ENCODE measurements at regions of chr4 and their contacts with region 1.

Region 1: DNA sequence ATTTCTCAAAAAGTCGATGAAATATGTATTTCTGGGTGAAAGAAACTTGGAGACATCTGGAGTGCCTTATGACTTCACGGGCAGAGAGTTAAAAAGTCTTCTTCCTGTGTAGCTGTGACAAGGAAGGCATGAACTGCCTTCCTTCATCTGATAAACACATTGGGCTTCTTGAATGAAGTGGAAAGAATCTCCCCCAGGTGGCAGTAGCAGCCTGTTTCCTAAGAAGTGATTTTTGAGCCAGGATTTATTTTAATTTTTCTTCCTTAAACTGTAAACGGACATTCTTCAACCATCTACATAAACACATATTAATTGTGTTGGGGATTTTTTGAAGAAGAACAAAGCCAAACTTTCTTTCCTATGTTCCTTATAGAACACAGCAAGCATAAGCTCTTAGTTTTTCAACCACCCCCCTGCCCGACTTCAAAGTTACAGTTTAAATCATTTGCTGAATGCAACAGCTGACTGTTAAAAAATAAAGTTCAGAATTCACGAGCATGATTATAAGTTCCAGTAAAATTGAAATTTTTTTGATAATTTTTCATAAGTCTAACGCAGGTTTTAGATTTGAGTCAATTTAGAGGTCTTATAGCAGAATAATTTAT is 980 bp upstream of the GIMD1 start:
- DNase-seq: peak; percentile 50
- H3K4me3 ChIP-seq: no peak overlapping the region
- H3K27ac ChIP-seq: no peak overlapping the region
- H3K4me1 ChIP-seq: peaks cover 12% of the 10 kb centered on the region
- H3K27me3 ChIP-seq: no peaks in the 10 kb centered on the region
- CTCF ChIP-seq: peak; percentile 71 to 76

Region 2: GRCh38 chr4:106266201-106266600 is 103.4 kb before region 1 on chr4:
- CTCF ChIA-PET with region 1: interaction called, 26 read pairs
- dilution Hi-C with region 1: no loop called
- in situ Hi-C with region 1: no loop called
- intact Hi-C with region 1: loop called (anchors 1 kb)
- DNase-seq: peak; percentile 37
- H3K4me3 ChIP-seq: no peak overlapping the region
- H3K27ac ChIP-seq: no peak overlapping the region
- H3K4me1 ChIP-seq: no peaks in the 10 kb centered on the region
- H3K27me3 ChIP-seq: no peaks in the 10 kb centered on the region
- CTCF ChIP-seq: peak; percentile 55 to 67

Region 3: DNA sequence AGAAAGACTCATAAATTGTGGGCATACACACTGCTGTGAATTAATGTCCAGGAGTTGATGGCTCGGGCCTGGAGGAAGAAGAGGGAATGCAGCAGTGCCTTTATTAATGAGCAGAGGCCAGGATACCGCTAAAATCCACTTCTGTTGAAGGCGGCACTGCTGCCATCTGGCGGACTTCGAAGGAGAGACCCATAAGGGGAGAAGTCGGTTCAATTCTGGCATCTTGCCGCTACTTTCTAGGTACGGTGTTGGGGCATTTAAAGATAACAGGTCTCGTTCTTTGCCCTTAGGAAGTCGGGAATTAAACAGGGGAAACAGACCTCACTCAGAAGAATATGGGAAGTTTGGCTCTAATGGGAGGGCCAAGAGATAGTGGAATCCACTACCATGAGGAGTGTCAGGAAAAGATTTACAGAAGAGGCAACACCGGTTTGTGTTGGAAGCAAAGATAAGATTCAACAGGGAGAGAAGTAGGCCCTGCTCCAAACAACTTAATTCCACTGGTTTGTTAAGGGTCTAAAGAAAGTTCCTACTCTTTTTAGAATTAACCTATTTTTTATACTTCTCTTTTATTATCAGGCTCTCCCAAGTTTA is 132.6 kb after region 1 on chr4:
- CTCF ChIA-PET with region 1: no interaction called
- dilution Hi-C with region 1: no loop called
- in situ Hi-C with region 1: loop called in 1 of 2 experiments (anchors 10 kb)
- intact Hi-C with region 1: loop called (anchors 1 kb)
- DNase-seq: peak; percentile 52
- H3K4me3 ChIP-seq: no peak overlapping the region
- H3K27ac ChIP-seq: no peak overlapping the region
- H3K4me1 ChIP-seq: no peaks in the 10 kb centered on the region
- H3K27me3 ChIP-seq: no peaks in the 10 kb centered on the region
- CTCF ChIP-seq: peak; percentile 65 to 87

Region 4: DNA sequence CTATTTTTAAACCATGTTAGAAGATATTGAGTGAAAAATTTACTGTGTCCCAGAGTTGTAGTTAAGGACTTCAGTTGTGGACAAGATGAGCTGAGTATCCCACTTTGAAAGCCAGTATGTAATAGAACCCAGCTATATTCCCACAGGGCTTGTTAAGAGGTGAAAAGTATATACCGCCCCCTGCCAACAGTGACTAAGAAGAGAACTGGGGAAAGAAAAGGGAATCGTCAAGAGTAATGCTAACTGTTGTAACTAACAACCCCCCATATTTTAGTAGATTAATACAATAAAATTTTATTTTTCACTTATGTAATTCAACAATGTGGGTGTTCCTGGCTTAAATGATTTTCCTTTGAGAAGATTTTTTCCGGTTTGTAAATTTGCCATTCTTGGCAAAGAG is 249.4 kb after region 1 on chr4:
- CTCF ChIA-PET with region 1: no interaction called
- dilution Hi-C with region 1: no loop called
- in situ Hi-C with region 1: no loop called
- intact Hi-C with region 1: loop called (anchors 10 kb)
- DNase-seq: no peak
- H3K4me3 ChIP-seq: no peak overlapping the region
- H3K27ac ChIP-seq: no peak overlapping the region
- H3K4me1 ChIP-seq: no peaks in the 10 kb centered on the region
- H3K27me3 ChIP-seq: no peaks in the 10 kb centered on the region
- CTCF ChIP-seq: peak in 1 of 2 donors; percentile 39

Region 5: DNA sequence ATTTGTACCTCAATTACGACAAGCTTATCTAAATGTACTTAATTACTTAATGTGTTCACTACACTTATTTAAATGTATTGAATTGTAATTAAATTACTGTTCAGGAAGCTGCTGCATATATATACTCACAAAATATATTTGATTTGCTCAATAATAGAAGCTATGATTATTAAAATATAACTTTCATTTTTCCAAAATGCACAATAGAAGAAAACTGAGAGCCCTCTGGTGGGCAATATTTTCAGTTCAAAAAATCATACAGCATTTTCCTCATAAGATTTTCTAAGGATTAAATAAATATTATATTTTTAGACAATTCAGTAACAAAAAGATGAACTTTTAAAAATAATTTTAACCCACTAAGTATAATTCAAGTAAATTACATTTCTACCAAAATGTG is 449.2 kb after region 1 on chr4:
- CTCF ChIA-PET with region 1: no interaction called
- dilution Hi-C with region 1: no loop called
- in situ Hi-C with region 1: loop called in 1 of 2 experiments (anchors 10 kb)
- intact Hi-C with region 1: no loop called
- DNase-seq: no peak
- H3K4me3 ChIP-seq: no peak overlapping the region
- H3K27ac ChIP-seq: no peak overlapping the region
- H3K4me1 ChIP-seq: no peaks in the 10 kb centered on the region
- H3K27me3 ChIP-seq: no peaks in the 10 kb centered on the region
- CTCF ChIP-seq: no peak

Measured in mammary epithelial cell (primary cell).